Activated CD4-positive, alpha-beta T cell treated with anti-CD3 and anti-CD28 coated beads, Interleukin-2, amount 10 ng/mL, durations not matched to agents 24 days and 14 days (primary cell): ENCODE measurements at regions of chr7 and their contacts with region 1.

Region 1: DNA sequence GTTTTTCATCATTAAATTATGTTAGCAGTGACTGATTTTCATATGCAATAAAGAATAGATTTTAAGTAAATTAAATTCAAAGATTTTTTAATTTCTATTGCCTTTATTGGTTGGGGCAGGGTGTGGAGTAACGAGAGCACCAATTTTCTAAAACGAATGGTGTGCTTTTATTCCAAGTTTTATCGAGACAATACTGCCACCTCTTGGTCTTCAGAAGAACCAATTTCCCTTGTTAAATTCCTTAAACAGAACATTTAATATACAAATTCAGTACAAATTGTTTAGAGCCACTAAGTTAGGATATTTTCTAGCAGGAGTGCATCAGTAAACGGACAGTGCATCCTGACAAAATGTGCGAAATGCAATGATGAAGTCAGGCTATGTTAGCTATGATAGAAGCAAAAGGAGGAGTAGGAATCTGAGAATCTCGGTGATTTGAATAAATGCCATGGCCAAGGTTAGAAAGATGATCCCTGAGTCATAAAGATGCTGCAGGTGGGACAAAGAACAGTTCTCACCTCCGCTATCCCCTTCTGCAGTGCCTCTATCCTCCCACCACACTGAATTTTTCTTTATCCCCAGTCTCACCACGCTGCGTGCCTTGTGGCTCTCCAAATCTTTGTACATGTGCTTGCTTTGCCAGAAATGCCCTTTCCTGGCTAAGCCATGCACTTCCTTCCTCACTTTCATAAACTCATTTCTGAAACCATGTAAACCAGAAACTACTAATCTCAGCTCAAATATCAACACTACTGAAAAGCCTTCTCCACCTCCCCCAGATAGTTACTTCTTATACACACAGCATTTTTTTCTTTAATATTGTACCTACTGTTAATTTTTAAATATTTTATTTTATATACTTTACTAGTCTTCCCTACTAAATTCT is 31.9 kb upstream of the AGBL3 start:
- DNase-seq: no peak
- H3K4me3 Mint-ChIP-seq: no peak overlapping the region
- H3K27ac Mint-ChIP-seq: no peak overlapping the region
- H3K4me1 Mint-ChIP-seq: peaks cover 4% of the 10 kb centered on the region
- H3K27me3 Mint-ChIP-seq: no peaks in the 10 kb centered on the region

Region 2: GRCh38 chr7:134632937-134633540 is 321.4 kb before region 1 on chr7:
- intact Hi-C with region 1: loop called (anchors 1 kb)
- DNase-seq: peak; percentile 79
- H3K4me3 Mint-ChIP-seq: no peak overlapping the region
- H3K27ac Mint-ChIP-seq: no peak overlapping the region
- H3K4me1 Mint-ChIP-seq: peaks cover 23% of the 10 kb centered on the region
- H3K27me3 Mint-ChIP-seq: peaks cover 16% of the 10 kb centered on the region

Region 3: DNA sequence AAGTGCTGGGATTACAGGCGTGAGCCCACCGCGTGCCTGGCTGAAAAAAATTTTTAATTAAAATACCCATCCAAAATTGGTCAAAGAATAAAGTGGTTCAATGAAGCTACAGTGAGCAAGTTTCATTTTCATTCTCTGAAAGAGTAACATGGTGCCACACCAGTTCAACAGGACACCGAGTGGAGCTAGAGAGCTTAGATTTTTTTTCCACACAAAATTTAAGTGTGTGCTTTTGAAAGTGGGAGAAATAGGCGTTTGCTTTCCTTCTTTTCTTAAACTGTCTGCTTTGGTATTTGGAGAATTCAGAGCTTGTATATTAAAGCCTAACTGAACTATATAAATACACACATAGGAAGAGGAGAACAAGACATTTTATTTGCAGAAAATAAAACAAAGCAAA is 264.4 kb before region 1 on chr7:
- intact Hi-C with region 1: loop called (anchors 1 kb)
- DNase-seq: peak; percentile 62
- H3K4me3 Mint-ChIP-seq: no peak overlapping the region
- H3K27ac Mint-ChIP-seq: no peak overlapping the region
- H3K4me1 Mint-ChIP-seq: peaks cover 11% of the 10 kb centered on the region
- H3K27me3 Mint-ChIP-seq: no peaks in the 10 kb centered on the region

Region 4: DNA sequence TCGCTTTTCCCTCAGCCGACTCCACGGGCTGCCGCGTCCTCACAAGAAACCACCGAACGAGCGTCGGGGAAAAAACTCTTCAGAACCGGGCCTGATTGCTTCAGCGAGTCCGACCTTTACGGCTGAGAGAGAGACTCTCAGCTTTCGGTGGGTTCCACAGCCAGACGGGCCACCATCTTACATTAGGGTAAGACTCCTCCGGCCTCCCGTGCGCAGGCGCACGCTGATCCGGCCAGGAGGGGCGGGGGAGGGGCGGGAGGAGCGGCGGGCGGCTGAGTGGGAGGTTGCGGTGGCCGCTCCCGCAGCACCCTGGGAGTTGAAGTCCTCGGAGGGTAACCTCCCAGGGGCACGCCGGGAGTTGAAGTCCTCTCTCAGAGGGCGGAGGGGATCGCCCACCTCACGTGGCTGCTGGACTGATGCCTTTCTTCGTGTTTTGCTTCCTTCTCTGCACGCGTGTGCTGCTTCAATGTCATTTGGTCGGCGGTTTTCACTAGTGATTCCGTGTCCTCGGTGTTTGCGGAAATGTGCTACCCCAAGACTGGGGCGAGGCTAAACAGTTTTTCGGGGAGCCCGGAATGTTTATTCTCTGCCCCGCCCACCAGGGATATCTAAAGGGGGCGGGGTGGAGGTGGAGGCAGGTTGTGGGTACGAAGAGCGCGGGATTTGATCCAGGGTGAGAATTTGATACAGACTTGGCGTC is 555.6 kb after region 1 on chr7 and contains the start of gene CNOT4:
- intact Hi-C with region 1: no loop called
- DNase-seq: peak; percentile 97
- H3K4me3 Mint-ChIP-seq: no peak within 1 kb of the TSS
- H3K27ac Mint-ChIP-seq: no peak within 1 kb of the TSS
- H3K4me1 Mint-ChIP-seq: peaks cover 13% of the 10 kb centered on the region
- H3K27me3 Mint-ChIP-seq: no peaks in the 10 kb centered on the region
- total RNA-seq, gene CNOT4: 21.1 and 26.3 TPM in 2 replicates

Region 5: DNA sequence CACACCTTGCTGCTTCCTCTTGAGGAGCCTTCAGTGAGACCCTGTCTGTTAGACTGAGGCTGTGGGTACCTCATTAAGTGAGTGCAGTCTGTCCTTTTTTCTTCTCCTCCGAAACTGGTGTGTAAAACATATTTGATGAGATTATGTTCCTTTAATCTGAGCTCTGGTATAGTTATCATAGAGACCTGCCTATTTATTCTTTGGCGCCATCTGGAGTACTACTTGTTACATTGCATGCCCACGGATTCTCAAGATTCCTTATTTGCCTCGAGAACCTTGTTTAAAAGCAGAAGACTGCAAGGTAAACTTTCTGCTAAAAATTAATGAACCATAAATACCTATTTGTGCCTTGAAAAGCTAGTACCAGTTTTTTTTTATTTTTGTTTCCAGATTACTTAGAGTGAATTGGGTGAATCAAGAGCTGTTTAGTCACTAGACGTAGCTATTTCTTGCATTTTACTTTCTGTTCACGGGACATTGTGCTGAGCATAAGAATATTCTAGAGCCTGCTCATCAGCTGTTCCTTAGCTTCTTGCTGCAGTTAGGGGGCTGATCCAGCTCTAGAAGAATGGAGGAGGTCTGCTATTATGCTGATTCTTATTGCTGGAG is 691.0 kb after region 1 on chr7:
- intact Hi-C with region 1: no loop called
- DNase-seq: peak; percentile 76
- H3K4me3 Mint-ChIP-seq: no peak overlapping the region
- H3K27ac Mint-ChIP-seq: no peak overlapping the region
- H3K4me1 Mint-ChIP-seq: no peaks in the 10 kb centered on the region
- H3K27me3 Mint-ChIP-seq: no peaks in the 10 kb centered on the region